ENCODE measurements at regions of chr5 and their contacts with region 1.

Region 1: GRCh38 chr5:36875790-36876388 is 680 bp upstream of the NIPBL start:
- DNase-seq: peak; percentile 58 to 90 (median 76)
- ATAC-seq: peak; percentile 50
- H3K4me3 ChIP-seq: peak overlapping the region; percentile 91 to 94
- H3K4me3 Mint-ChIP-seq: peak overlapping the region; percentile 94
- H3K27ac ChIP-seq: peak overlapping the region; percentile 90 to 92
- H3K27ac Mint-ChIP-seq: peak overlapping the region; percentile 96
- H3K4me1 ChIP-seq: peaks cover 42% of the 10 kb centered on the region
- H3K4me1 Mint-ChIP-seq: peaks cover 59% of the 10 kb centered on the region
- H3K27me3 ChIP-seq: no peaks in the 10 kb centered on the region
- H3K27me3 Mint-ChIP-seq: no peaks in the 10 kb centered on the region
- CTCF ChIP-seq: peak; percentile 37

Region 2: DNA sequence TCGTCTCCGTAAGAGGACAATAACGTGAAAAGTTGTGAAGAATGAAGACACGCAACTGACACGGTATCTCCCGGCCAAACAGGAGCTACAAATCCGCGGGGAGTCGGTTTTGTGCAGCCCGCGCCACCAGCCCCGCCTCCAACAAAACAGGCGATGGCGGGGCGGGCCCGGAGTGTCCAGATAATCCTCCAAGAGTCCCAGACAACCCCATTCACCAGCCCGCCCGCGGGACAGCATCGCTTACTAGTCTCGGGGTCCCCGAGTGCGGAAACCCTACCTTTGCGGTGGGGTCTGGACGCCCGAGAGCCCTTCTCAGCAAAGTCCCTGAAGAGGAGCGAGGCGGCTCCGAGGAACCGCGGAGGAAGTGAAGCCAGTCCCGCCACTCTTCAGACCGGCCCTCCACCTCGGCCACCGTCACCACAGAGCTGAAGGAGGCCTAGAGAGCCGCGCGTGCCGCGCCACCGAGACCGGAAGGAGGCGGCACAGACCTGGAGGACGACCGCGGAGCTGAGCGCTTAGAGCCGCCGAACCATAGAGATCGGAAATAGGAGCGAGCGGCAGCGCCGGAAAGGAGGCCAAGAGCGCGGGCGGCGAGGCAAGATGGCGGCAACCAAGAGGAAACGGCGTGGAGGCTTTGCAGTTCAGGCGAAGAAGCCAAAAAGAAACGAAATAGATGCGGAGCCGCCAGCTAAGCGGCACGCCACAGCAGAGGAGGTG is 1960.6 kb before region 1 on chr5 and contains the starts of genes BRIX1 and RAD1:
- CTCF ChIA-PET with region 1: no interaction called
- POLR2A ChIA-PET with region 1: interaction called, 3 read pairs
- intact Hi-C with region 1: loop called in 1 of 2 experiments (anchors 5 kb)
- DNase-seq: peak; percentile 83 to 97 (median 93)
- ATAC-seq: peak; percentile 94
- H3K4me3 ChIP-seq: peak within 1 kb of the TSS; percentile 76 to 97
- H3K4me3 Mint-ChIP-seq: no peak within 1 kb of the TSS
- H3K27ac ChIP-seq: peak within 1 kb of the TSS; percentile 79 to 86
- H3K27ac Mint-ChIP-seq: no peak within 1 kb of the TSS
- H3K4me1 ChIP-seq: peaks cover 24% of the 10 kb centered on the region
- H3K4me1 Mint-ChIP-seq: peaks cover 37% of the 10 kb centered on the region
- H3K27me3 ChIP-seq: no peaks in the 10 kb centered on the region
- H3K27me3 Mint-ChIP-seq: no peaks in the 10 kb centered on the region
- CTCF ChIP-seq: no peak
- total RNA-seq, gene BRIX1: 34.9 to 40.9 TPM
- total RNA-seq, gene RAD1: 34.7 to 35.4 TPM

Region 3: GRCh38 chr5:35919191-35919590 is 956.7 kb before region 1 on chr5:
- CTCF ChIA-PET with region 1: no interaction called
- POLR2A ChIA-PET with region 1: no interaction called
- intact Hi-C with region 1: loop called in 1 of 2 experiments (anchors 10 kb)
- DNase-seq: no peak
- ATAC-seq: no peak
- H3K4me3 ChIP-seq: no peak overlapping the region
- H3K4me3 Mint-ChIP-seq: no peak overlapping the region
- H3K27ac ChIP-seq: no peak overlapping the region
- H3K27ac Mint-ChIP-seq: no peak overlapping the region
- H3K4me1 ChIP-seq: peaks cover 2% of the 10 kb centered on the region
- H3K4me1 Mint-ChIP-seq: peaks cover 24% of the 10 kb centered on the region
- H3K27me3 ChIP-seq: no peaks in the 10 kb centered on the region
- H3K27me3 Mint-ChIP-seq: no peaks in the 10 kb centered on the region
- CTCF ChIP-seq: no peak

Region 4: DNA sequence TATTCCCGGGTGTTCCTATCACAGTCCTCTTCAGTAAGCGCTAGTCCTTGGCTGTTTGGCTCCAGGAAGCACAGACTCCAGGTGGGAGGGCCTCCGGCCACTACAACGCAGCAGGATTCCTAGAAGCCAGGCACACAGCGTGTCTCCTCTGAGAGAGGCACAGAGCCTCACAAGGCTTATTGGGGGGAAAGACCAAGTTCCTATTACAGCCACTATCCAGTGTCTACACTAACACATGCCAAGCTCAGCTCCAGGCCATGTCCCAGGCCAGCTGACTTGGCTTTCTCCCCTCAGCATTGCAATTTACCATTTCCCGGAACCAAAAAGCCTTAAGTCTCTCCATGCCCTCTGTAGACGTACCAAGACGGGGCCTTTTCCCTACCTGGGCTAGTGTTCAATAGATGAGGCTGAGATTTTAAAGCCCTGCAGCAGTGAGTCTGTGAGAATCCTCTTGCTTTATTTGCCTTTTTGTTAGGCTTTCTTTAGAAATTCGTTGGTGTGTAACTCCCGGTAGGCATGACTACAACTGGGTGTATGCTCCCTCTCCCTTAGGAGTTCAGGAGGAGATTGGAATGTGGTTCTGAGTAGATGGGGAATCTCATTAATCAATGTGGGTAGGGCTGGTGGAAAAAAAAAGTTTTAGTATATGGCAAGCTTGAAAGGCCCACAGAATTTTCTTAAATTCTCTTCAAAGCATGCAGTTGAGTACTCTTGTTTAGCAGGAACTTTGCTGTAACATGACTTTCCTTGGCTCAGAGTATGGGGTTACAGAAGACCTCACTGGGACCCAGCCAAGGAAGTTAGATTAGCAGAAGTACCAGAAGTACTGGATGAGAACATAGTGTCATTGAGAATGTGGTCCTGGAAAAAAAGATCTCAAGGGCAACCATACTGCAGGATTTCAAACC is 353.8 kb before region 1 on chr5:
- CTCF ChIA-PET with region 1: no interaction called
- POLR2A ChIA-PET with region 1: no interaction called
- intact Hi-C with region 1: no loop called
- DNase-seq: no peak
- ATAC-seq: no peak
- H3K4me3 ChIP-seq: no peak overlapping the region
- H3K4me3 Mint-ChIP-seq: no peak overlapping the region
- H3K27ac ChIP-seq: no peak overlapping the region
- H3K27ac Mint-ChIP-seq: no peak overlapping the region
- H3K4me1 ChIP-seq: no peaks in the 10 kb centered on the region
- H3K4me1 Mint-ChIP-seq: no peaks in the 10 kb centered on the region
- H3K27me3 ChIP-seq: no peaks in the 10 kb centered on the region
- H3K27me3 Mint-ChIP-seq: no peaks in the 10 kb centered on the region
- CTCF ChIP-seq: no peak

Region 5: GRCh38 chr5:36728697-36729543 is 147.0 kb before region 1 on chr5:
- CTCF ChIA-PET with region 1: interaction called, 12 read pairs
- POLR2A ChIA-PET with region 1: no interaction called
- intact Hi-C with region 1: no loop called
- DNase-seq: peak in 3 of 9 experiments; percentile 21 to 73 (median 64)
- ATAC-seq: peak; percentile 64
- H3K4me3 ChIP-seq: no peak overlapping the region
- H3K4me3 Mint-ChIP-seq: no peak overlapping the region
- H3K27ac ChIP-seq: no peak overlapping the region
- H3K27ac Mint-ChIP-seq: no peak overlapping the region
- H3K4me1 ChIP-seq: no peaks in the 10 kb centered on the region
- H3K4me1 Mint-ChIP-seq: peaks cover 14% of the 10 kb centered on the region
- H3K27me3 ChIP-seq: no peaks in the 10 kb centered on the region
- H3K27me3 Mint-ChIP-seq: peaks cover 2% of the 10 kb centered on the region
- CTCF ChIP-seq: peak; percentile 80

Region 6: DNA sequence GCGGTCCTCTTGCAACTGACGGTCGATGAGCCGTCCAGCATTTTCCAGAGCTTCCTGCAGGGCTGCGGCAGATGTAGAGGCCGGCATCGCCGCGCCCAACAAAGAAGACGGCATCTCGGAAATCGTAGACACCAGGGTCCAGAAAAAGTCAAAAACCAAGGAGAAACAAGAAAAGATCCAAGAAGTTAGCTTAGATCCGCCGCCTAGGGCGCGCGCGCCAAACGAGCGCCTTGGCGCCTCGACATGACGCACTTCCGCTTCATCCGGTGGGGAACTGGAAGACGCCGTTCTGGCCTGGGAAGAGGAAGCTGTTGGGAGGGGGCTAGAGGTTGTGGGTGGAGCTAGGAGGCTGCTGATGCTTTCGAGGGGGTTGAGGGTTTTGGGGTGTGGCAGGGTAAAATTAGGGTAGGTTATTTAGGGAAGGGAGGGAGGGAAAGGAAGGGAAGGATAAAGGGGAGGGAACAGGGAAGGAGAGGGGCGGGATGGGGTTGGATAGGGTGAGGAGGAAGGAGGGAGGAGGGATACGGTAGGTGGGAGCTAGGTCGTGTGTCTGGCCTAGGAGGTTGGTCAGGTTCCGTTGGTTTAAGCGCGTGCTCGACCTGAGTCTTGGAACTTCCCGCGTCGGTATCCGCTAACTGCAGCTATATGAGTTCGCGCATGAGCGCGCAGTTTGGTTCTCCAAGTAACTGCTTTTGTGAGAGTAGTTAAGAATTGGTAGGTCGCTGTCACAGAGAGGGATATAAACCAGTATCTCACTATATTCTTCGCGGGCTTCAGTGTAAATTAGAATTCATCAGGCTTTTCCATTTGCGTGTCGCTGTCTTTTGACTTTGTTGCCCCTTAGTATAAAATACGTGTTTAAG is 495.2 kb after region 1 on chr5 and contains the start of gene NUP155:
- CTCF ChIA-PET with region 1: no interaction called
- POLR2A ChIA-PET with region 1: interaction called, 4 read pairs
- intact Hi-C with region 1: loop called (anchors 2 to 5 kb)
- DNase-seq: peak; percentile 71 to 96 (median 88)
- ATAC-seq: peak; percentile 93
- H3K4me3 ChIP-seq: peak within 1 kb of the TSS; percentile 92 to 95
- H3K4me3 Mint-ChIP-seq: peak within 1 kb of the TSS; percentile 97
- H3K27ac ChIP-seq: peak within 1 kb of the TSS; percentile 88 to 93
- H3K27ac Mint-ChIP-seq: peak within 1 kb of the TSS; percentile 97
- H3K4me1 ChIP-seq: peaks cover 18% of the 10 kb centered on the region
- H3K4me1 Mint-ChIP-seq: peaks cover 32% of the 10 kb centered on the region
- H3K27me3 ChIP-seq: no peaks in the 10 kb centered on the region
- H3K27me3 Mint-ChIP-seq: no peaks in the 10 kb centered on the region
- CTCF ChIP-seq: no peak
- total RNA-seq, gene NUP155: 22.9 to 27.4 TPM